Common myeloid progenitor, CD34-positive (primary cell): ENCODE measurements at regions of chr15 and their contacts with region 1.

Region 1: GRCh38 chr15:65054333-65055200 is 9.4 kb downstream of the SLC51B start:
- DNase-seq: peak; percentile 61 to 76 (median 66)
- H3K4me3 ChIP-seq: no peak overlapping the region
- H3K27ac ChIP-seq: no peak overlapping the region
- H3K4me1 ChIP-seq: peaks cover 4 to 41% (median 35%) of the 10 kb centered on the region in 4 experiments
- H3K27me3 ChIP-seq: no peaks in the 10 kb centered on the region

Region 2: GRCh38 chr15:65032801-65033537 is 21.6 kb before region 1 on chr15:
- CTCF ChIA-PET with region 1: interaction called, 19 read pairs
- POLR2A ChIA-PET with region 1: interaction called, 4 read pairs
- DNase-seq: peak; percentile 66 to 75 (median 74)
- H3K4me3 ChIP-seq: peak overlapping the region in 1 of 7 experiments; percentile 50
- H3K27ac ChIP-seq: no peak overlapping the region
- H3K4me1 ChIP-seq: peaks cover 5 to 24% (median 17%) of the 10 kb centered on the region in 4 experiments
- H3K27me3 ChIP-seq: peaks cover 0 to 3% (median 0%) of the 10 kb centered on the region in 5 experiments

Region 3: DNA sequence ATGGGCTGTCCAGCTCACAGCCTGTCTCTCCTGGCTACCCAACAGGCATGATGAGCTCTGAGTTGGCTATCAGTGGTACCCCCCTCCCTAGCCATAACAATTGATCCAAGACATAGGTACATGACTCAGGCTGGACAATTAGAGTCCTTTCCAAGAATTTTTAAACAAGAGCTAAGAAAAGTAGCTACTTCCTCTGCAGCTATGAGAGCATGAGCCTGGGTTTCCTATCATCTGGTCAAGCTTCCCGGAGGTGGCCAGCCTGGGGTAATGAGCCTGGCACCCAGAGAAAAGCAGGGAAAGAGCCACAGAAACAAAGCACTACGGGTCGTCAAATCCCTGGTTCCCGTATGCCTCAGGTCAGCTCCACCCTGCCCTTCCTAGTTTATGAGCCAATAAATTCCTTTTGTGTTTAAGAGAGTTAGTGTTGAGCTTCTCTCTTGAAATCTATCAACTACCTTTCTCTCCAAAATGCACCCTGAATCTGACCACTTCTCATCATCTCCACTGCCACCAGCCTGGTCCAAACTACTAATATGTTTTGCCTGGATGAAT is 11.7 kb before region 1 on chr15:
- CTCF ChIA-PET with region 1: interaction called, 18 read pairs
- POLR2A ChIA-PET with region 1: interaction called, 4 read pairs
- DNase-seq: no peak
- H3K4me3 ChIP-seq: no peak overlapping the region
- H3K27ac ChIP-seq: no peak overlapping the region
- H3K4me1 ChIP-seq: no peaks in the 10 kb centered on the region
- H3K27me3 ChIP-seq: no peaks in the 10 kb centered on the region

Region 4: DNA sequence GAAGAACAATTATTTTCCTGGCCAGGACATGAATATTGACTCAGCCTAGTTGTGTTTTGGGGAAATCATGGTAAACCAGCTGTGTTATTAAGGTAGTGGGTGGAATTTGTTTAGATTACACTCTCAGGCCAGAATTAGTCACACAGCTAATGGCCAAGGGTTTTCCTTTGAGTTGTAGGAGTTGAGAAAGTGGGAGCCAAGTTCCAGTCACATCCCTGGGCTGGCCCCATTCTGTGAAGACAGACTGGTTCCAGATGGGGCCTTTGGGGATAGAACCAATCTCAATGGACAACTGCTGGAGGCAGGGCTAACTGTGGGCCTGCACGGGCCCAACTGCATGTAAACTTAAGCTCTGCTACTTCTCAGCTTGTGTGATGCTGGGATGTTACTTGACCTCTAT is 14.6 kb after region 1 on chr15:
- CTCF ChIA-PET with region 1: interaction called, 282 read pairs
- POLR2A ChIA-PET with region 1: no interaction called
- DNase-seq: no peak
- H3K4me3 ChIP-seq: no peak overlapping the region
- H3K27ac ChIP-seq: no peak overlapping the region
- H3K4me1 ChIP-seq: peaks cover 0 to 21% (median 11%) of the 10 kb centered on the region in 4 experiments
- H3K27me3 ChIP-seq: peaks cover 7 to 41% (median 16%) of the 10 kb centered on the region in 5 experiments